SK-N-SH (cell line): ENCODE measurements at regions of chr17 and their contacts with region 1.

Region 1: DNA sequence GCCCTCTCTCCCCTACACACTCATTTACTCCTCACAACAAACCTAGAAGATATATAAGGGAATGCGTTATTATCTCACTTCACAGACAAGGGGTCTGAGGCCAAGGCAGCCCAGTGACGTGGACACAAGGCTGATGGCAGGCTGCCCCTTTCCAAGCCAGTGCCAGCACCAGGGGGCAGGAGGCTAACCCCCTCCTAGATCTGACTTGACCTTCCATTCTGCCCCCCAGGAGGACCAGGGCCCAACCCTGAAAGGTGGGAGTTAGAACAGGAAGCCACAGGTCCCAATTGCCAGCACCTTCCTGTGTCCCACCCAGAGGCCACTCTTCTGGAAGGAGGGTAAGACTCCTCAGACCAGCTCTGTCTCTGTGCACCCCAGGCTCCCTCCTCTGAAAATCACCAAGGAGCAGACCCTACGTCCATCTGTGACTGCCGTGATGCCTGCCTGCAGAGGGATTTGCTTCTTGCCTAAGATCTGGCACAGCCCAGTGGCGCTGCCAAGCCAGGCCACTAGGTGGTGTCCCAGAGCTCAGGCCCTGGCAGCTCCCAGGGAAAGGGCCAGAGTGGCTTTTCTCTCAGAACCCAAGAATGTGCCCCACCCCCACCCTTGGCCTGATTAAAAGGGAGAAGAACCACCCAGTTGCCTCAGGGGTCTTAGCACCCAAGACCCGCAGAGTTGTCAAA is 42.4 kb upstream of the MRPS23 start:
- DNase-seq: peak; percentile 92
- H3K4me3 ChIP-seq: peak overlapping the region in 1 of 2 experiments; percentile 21; a peak in 1 of 4 replicates
- H3K27ac ChIP-seq: peak overlapping the region; percentile 44 to 96
- H3K4me1 ChIP-seq: peaks cover 32 to 60% of the 10 kb centered on the region in 2 experiments
- H3K27me3 ChIP-seq: no peaks in the 10 kb centered on the region
- CTCF ChIP-seq: peak; percentile 100
- EP300 ChIP-seq: no peak
- RAD21 ChIP-seq: peak; percentile 91

Region 2: DNA sequence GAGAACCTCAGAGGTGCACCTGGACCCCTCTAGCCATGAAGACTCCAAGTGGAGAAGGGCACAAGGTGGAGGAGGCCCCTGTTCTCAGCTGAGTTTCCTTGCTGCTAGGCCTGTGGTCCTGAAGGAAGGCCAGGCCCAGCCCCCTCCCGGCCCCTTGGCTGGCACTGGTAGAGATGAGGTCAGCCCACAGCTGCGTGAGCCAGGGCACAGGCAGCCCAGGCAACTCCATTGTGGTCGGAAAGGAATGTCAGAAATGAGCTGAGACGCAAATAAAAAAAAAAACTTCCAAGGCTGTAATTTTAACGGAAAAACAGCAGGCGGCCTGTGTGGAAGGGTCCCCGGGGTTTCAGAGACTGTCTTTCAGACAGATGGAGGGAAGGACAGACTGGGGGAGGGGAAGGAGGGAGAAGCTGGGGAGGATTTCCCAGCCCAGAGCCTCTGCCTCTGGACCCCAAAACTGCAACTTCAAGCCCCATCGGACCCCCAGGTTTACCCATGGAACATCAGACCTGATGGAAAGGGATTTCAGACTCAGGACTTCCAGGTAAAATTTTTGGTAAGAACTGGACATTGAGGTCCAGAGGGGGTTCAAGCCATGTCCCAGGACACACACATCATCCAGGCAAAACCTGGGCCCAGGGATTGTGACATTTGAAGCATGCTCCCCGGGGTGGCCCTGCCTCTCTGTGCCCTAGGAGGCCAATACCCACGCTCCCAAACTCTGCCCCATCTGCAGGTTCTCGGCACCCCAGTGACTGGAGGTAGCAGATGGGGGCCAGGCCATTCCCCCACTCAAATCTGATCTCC is 16.8 kb before region 1 on chr17:
- CTCF ChIA-PET with region 1: interaction called, 29 read pairs
- POLR2A ChIA-PET with region 1: interaction called, 3 read pairs
- DNase-seq: peak; percentile 70
- H3K4me3 ChIP-seq: peak overlapping the region in 1 of 2 experiments; percentile 51; a peak in 2 of 4 replicates
- H3K27ac ChIP-seq: peak overlapping the region; percentile 87 to 100
- H3K4me1 ChIP-seq: peaks cover 36 to 67% of the 10 kb centered on the region in 2 experiments
- H3K27me3 ChIP-seq: no peaks in the 10 kb centered on the region
- CTCF ChIP-seq: peak; percentile 80
- EP300 ChIP-seq: peak; percentile 60 to 99
- RAD21 ChIP-seq: peak; percentile 55

Region 3: GRCh38 chr17:57916925-57917858 is 24.9 kb after region 1 on chr17:
- CTCF ChIA-PET with region 1: interaction called, 12 read pairs
- POLR2A ChIA-PET with region 1: no interaction called
- DNase-seq: no peak
- H3K4me3 ChIP-seq: no peak overlapping the region
- H3K27ac ChIP-seq: no peak overlapping the region
- H3K4me1 ChIP-seq: peaks cover 9 to 45% of the 10 kb centered on the region in 2 experiments; a peak in 1 of 4 replicates
- H3K27me3 ChIP-seq: no peaks in the 10 kb centered on the region
- CTCF ChIP-seq: no peak
- EP300 ChIP-seq: no peak
- RAD21 ChIP-seq: peak; percentile 49

Region 4: DNA sequence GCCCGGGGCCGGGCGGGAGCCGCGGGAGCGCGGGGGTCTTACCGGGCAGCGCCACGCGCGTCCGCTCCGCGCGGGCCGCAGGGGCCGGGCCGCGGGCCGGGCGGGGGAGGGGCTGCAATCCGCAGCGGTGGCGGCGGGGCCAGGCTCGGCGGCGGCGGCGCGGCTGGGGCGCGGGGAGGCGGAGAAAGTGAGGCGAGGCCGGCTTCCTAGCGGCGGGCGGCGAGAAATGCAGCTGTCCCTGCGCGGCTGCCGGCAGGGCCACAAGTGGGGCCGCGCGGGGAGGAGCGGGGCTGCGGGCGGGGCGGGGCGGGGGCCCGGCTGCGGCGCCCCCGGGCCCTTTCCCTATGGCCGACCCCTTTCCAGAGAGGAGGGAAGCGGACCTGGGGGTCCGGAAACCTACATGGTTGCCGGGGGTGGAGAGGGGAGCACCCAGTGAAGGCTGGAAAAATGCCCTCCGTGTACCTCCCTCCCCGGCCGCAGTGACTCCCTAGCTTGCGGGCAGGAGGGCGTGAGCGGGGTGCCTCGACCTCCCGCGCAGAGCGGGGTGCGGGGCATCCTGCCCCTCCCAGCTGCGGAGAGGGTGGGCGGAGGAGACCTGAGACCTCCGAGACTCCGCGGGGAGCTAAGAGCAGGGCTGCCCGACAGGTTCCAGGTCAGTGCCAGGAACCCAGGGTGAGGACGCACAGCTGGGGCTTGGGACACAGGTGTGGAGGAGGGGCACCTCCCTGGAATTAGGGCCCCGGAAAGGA is 63.1 kb after region 1 on chr17 and contains the start of gene CUEDC1:
- CTCF ChIA-PET with region 1: interaction called, 13 read pairs
- POLR2A ChIA-PET with region 1: no interaction called
- DNase-seq: peak; percentile 98
- H3K4me3 ChIP-seq: peak within 1 kb of the TSS; percentile 67 to 92
- H3K27ac ChIP-seq: peak within 1 kb of the TSS; percentile 71 to 79
- H3K4me1 ChIP-seq: peaks cover 26 to 41% of the 10 kb centered on the region in 2 experiments; a peak in 3 of 4 replicates
- H3K27me3 ChIP-seq: no peaks in the 10 kb centered on the region
- CTCF ChIP-seq: no peak
- EP300 ChIP-seq: peak in 1 of 2 experiments; percentile 43; a peak in 1 of 4 replicates
- RAD21 ChIP-seq: peak; percentile 17; the same call in 1 of the 2 replicates
- polyA plus RNA-seq, gene CUEDC1: 50.3 and 58.9 TPM in 2 replicates

Region 5: DNA sequence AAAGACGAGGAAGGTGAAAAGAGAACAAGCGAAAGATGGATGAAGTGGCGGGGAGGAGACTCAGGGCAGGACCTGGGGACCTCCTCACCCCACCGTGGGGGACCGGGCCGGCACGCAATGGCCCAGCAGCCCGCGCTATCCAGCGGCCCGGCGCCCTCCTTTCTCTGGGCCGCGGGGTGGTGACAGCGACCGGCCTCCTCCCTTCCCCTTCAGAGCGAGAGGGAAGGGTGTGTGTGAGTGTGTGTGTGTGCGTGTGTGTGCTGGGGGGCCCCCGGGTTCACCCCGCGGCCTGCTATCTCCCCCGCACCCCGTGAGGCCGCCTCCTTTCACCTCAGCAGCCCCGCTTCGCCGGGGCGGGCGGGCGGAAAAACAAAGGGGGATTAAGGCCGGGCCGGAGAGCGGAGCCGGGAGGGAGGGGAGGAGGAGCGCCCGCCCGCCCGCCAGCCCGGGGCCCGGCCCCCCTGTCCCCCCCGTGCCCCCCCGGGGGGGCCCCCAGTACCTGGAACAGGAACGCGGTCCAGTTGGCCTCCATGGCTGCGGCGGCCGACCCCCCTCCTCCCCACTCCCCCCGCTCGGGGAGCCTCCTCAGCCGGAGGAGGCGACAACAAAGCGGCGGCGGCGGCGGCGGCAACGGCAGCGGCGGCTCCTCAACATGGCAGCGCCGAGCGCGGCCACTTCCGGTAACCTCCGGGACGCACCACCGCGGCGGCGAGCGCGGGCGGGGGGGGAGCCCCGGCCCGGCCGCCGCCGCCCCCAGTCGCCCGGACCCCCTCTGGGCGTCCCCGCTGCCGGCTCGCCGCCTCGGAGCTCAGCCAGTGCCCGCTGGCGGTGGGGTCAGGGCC is 95.5 kb after region 1 on chr17 and contains the start of gene VEZF1:
- CTCF ChIA-PET with region 1: interaction called, 162 read pairs
- POLR2A ChIA-PET with region 1: interaction called, 3 read pairs
- DNase-seq: peak; percentile 96
- H3K4me3 ChIP-seq: peak within 1 kb of the TSS; percentile 78 to 98
- H3K27ac ChIP-seq: peak within 1 kb of the TSS; percentile 96 to 100
- H3K4me1 ChIP-seq: peaks cover 20 to 47% of the 10 kb centered on the region in 2 experiments
- H3K27me3 ChIP-seq: no peaks in the 10 kb centered on the region
- CTCF ChIP-seq: no peak
- EP300 ChIP-seq: no peak
- RAD21 ChIP-seq: no peak
- polyA plus RNA-seq, gene VEZF1: 35.1 and 43.0 TPM in 2 replicates

Region 6: DNA sequence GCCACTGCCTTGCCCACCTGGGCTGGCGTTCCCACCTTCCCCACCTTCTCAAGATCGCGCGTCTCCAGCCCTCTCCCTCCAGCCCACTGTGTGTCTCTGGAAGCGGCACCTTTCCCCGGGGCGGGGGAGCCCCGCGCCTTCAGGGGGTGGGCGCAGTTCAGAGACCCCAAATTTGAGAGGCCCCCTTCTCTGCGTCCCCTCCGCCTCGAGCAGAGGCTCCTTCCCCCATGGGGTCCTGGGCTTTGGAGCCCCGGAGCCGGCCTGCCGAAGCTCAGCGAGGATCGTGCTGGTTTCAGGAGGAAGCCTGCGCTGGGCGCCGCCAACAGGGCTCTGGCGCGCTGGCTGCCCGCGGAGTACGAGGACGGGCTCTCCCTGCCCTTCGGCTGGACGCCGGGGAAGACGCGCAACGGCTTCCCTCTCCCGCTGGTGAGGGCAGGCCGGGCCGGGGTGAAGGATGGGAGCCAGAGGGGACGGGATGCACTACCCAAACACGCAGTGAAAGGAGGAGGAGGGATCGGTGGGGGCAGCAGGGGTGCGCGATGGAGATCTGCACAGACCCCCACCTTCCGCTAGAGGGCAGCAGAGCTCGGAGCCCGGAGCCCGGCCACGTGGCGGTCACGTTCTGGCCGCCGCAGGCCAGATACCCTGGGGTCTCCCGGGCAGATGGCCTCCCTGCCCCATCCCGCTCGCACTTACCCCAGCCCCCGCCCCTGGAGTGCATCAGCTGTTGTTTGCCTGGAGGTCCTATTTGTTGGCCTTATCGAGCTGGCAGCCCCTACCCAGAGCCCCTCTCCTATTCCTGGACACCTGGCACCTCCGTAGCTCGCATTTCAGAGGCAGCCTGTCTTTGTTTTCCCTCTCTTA is 357.2 kb after region 1 on chr17:
- CTCF ChIA-PET with region 1: no interaction called
- POLR2A ChIA-PET with region 1: no interaction called
- DNase-seq: peak; percentile 99
- H3K4me3 ChIP-seq: peak overlapping the region; percentile 47 to 71
- H3K27ac ChIP-seq: no peak overlapping the region
- H3K4me1 ChIP-seq: peaks cover 0 to 8% of the 10 kb centered on the region in 2 experiments; a peak in 1 of 4 replicates
- H3K27me3 ChIP-seq: peaks cover 79% of the 10 kb centered on the region
- CTCF ChIP-seq: peak; percentile 99
- EP300 ChIP-seq: no peak
- RAD21 ChIP-seq: peak; percentile 66